CD4-positive, alpha-beta T cell (primary cell): ENCODE measurements at regions of chr17 and their contacts with region 1.

Region 1: GRCh38 chr17:75877752-75878173 is 618 bp downstream of the TRIM47 start:
- DNase-seq: peak; percentile 52 to 90 (median 66)
- ATAC-seq: peak; percentile 72
- H3K4me3 ChIP-seq: peak overlapping the region; percentile 60
- H3K4me3 Mint-ChIP-seq: peak overlapping the region; percentile 91
- H3K27ac ChIP-seq: peak overlapping the region; percentile 15 to 66
- H3K27ac Mint-ChIP-seq: peak overlapping the region; percentile 91
- H3K4me1 ChIP-seq: peaks cover 64% of the 10 kb centered on the region
- H3K4me1 Mint-ChIP-seq: peaks cover 51% of the 10 kb centered on the region
- H3K27me3 ChIP-seq: no peaks in the 10 kb centered on the region
- H3K27me3 Mint-ChIP-seq: no peaks in the 10 kb centered on the region
- CTCF ChIP-seq: peak; percentile 70

Region 2: DNA sequence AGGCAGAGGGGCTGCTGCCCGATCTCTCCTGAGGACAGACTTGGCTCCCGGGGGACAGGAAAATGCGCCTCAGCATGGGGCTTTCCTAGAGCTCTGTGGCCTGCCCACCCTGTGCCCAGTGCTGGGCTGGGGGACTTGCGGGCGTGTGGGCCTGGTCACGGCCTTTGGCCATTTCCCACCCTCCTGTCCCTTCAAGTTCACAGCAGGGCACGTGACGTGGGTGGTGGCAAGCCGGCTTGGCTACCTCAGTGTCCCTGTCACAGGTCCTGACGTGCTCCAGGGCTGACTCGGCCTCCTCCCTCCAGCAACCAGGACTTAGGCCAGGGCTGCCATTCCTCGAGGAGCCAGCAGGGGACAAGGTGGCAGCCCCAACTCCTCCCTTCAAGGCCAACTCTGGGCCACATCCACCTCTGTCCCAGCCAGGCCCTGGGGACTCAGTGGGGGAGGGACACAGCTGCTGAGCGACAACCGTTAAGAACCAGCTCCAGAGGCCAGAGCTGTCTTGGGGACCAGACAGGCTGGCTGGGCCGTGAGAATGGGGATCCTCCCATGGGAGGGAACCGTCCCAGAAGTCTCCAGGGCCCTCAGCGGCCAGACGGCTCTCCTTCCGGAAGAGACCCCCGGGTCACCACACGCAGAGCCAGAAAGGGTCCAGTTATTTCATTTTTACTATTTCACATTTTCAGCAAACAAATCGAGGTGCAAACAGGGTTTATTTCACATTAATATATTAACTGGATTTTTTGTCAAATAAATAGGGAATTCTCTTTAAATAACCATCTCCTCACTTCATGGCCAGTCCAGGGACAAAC is 32.5 kb before region 1 on chr17:
- CTCF ChIA-PET with region 1: interaction called, 5 read pairs
- POLR2A ChIA-PET with region 1: interaction called, 19 read pairs
- intact Hi-C with region 1: loop called in 1 of 2 experiments (anchors 5 kb)
- DNase-seq: peak in 13 of 14 experiments; percentile 40 to 84 (median 55)
- ATAC-seq: peak; percentile 54
- H3K4me3 ChIP-seq: peak overlapping the region; percentile 81
- H3K4me3 Mint-ChIP-seq: peak overlapping the region; percentile 81
- H3K27ac ChIP-seq: peak overlapping the region; percentile 94 to 95
- H3K27ac Mint-ChIP-seq: peak overlapping the region; percentile 76
- H3K4me1 ChIP-seq: peaks cover 66% of the 10 kb centered on the region
- H3K4me1 Mint-ChIP-seq: peaks cover 26% of the 10 kb centered on the region
- H3K27me3 ChIP-seq: no peaks in the 10 kb centered on the region
- H3K27me3 Mint-ChIP-seq: no peaks in the 10 kb centered on the region
- CTCF ChIP-seq: peak; percentile 55

Region 3: DNA sequence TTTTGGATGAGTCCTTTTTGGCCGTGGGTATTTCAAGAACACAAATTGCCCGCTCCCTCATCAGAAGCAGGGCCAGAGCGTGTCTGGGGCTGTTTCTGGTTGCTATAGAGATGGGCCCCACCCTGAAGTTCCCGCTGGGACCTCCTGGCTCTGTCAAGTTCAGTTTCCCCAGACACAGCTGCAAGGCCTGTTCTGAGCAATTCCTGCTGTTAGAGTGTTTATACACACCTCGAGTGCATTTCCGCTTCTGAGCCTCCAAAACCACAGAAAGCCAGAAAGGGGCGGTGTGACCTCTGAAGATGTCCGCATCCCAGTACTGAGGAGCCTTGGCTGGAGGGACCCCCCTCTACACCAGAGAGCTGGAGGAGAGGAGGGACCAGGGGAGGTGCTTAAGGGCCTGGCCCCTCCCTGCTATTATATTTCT is 13.3 kb before region 1 on chr17:
- CTCF ChIA-PET with region 1: interaction called, 20 read pairs
- POLR2A ChIA-PET with region 1: interaction called, 13 read pairs
- intact Hi-C with region 1: no loop called
- DNase-seq: peak in 5 of 14 experiments; percentile 34 to 76 (median 67)
- ATAC-seq: peak; percentile 66
- H3K4me3 ChIP-seq: no peak overlapping the region
- H3K4me3 Mint-ChIP-seq: peak overlapping the region; percentile 59
- H3K27ac ChIP-seq: peak overlapping the region; percentile 31 to 68
- H3K27ac Mint-ChIP-seq: peak overlapping the region; percentile 77
- H3K4me1 ChIP-seq: peaks cover 34% of the 10 kb centered on the region
- H3K4me1 Mint-ChIP-seq: peaks cover 25% of the 10 kb centered on the region
- H3K27me3 ChIP-seq: no peaks in the 10 kb centered on the region
- H3K27me3 Mint-ChIP-seq: no peaks in the 10 kb centered on the region
- CTCF ChIP-seq: no peak

Region 4: DNA sequence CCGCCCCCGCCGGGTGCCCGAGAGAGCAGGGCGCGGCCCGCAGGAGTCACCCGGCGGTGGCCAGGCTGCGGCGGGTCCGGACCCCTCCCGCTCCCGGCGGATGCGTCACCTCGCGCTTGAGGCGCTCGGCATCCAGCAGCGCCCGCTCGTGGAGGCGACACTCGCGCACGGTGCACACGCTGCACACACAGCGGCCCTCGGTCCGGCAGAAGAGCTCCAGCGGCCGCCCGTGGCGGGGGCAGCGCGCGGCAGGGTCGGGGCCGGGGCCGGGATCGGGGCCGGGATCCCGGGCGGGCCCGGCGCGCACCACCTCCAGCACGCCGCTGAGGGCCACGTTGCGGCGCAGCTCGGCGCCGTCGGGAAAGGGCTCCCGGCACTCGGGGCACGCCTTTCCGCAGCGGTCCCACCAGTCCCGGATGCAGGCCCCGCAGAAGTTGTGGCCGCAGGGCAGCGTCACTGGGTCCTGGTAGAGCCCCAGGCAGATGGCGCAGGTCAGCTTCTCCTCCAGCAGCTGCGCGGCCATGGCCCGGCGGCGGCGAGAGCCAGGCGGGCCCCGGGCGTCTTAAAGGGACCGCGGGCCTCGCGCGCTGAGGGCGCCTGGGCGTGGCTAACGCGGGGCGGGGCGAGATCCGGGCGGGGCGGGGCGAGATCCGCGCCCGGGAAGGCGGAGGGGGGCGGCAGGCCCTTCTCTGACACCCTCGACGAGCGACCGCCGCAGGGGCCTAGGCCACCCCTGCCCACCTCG is 18.8 kb after region 1 on chr17 and contains the start of gene TRIM65:
- CTCF ChIA-PET with region 1: interaction called, 50 read pairs
- POLR2A ChIA-PET with region 1: interaction called, 49 read pairs
- intact Hi-C with region 1: loop called (anchors 1 to 2 kb)
- DNase-seq: peak; percentile 55 to 91 (median 74)
- ATAC-seq: peak; percentile 85
- H3K4me3 ChIP-seq: peak within 1 kb of the TSS; percentile 57
- H3K4me3 Mint-ChIP-seq: peak within 1 kb of the TSS; percentile 88
- H3K27ac ChIP-seq: peak within 1 kb of the TSS in 1 of 2 donors; percentile 29
- H3K27ac Mint-ChIP-seq: peak within 1 kb of the TSS; percentile 78
- H3K4me1 ChIP-seq: peaks cover 33% of the 10 kb centered on the region
- H3K4me1 Mint-ChIP-seq: peaks cover 25% of the 10 kb centered on the region
- H3K27me3 ChIP-seq: no peaks in the 10 kb centered on the region
- H3K27me3 Mint-ChIP-seq: no peaks in the 10 kb centered on the region
- CTCF ChIP-seq: peak; percentile 33
- total RNA-seq, gene TRIM65: 9.9 to 11.7 TPM

Region 5: DNA sequence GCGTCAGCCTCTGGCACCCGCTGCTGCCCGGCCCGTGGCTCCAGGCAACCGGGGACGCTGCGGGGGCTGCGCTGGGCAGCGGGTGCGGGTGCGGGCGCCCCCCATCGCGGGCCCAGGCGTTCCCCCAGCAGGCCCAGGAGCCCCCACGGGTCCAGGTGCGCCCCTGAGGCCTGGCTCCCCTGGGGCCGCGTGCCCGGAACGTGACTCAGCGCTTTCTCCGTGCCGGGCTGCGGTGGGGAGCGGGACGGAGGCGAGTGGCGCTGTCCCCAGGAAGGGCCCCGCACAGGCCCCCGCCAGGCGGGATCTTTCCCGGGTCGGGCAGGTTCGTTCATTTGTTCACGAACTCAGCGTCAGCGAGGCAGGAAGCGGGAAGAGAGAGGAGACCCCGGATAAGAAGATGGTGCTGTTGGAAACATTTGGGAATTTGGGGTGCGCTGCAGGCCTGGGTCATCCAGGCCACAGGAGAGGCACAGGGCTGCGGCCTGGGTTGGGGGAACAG is 244.2 kb after region 1 on chr17:
- CTCF ChIA-PET with region 1: no interaction called
- POLR2A ChIA-PET with region 1: no interaction called
- intact Hi-C with region 1: no loop called
- DNase-seq: peak in 3 of 14 experiments; percentile 21 to 49 (median 41)
- ATAC-seq: peak; percentile 12
- H3K4me3 ChIP-seq: peak overlapping the region; percentile 52
- H3K4me3 Mint-ChIP-seq: no peak overlapping the region
- H3K27ac ChIP-seq: no peak overlapping the region
- H3K27ac Mint-ChIP-seq: peak overlapping the region; percentile 42
- H3K4me1 ChIP-seq: peaks cover 31% of the 10 kb centered on the region
- H3K4me1 Mint-ChIP-seq: peaks cover 17% of the 10 kb centered on the region
- H3K27me3 ChIP-seq: no peaks in the 10 kb centered on the region
- H3K27me3 Mint-ChIP-seq: no peaks in the 10 kb centered on the region
- CTCF ChIP-seq: no peak